ENCODE measurements at regions of chr12 and their contacts with region 1.

Region 1: GRCh38 chr12:71999795-72000194 is 61.1 kb downstream of the TPH2 start:
- DNase-seq: no peak
- H3K4me3 Mint-ChIP-seq: no peak overlapping the region
- H3K27ac Mint-ChIP-seq: no peak overlapping the region
- H3K4me1 Mint-ChIP-seq: peaks cover 13% of the 10 kb centered on the region
- H3K27me3 Mint-ChIP-seq: peaks cover 27% of the 10 kb centered on the region

Region 2: DNA sequence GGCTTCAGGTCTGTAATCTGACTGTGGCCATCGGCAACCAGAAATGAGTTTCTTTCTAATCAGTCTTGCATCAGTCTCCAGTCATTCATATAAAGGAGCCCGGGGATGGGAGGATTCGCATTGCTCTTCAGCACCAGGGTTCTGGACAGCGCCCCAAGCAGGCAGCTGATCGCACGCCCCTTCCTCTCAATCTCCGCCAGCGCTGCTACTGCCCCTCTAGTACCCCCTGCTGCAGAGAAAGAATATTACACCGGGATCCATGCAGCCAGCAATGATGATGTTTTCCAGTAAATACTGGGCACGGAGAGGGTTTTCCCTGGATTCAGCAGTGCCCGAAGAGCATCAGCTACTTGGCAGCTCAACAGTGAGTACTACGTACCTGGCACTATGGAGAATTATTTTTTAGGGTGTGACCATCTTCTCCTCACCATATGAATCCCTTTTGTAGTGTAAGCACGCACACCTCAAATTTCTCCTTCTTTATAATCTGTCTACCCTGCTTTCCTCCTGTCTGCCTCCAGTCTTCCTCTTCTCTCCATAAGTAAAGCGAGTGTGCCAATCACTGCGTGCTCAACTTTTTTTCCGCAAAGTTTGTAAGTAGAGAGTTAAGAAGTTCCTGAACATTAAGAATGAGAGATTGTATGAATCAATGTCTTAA is 60.9 kb before region 1 on chr12 and contains the start of gene TPH2:
- intact Hi-C with region 1: loop called (anchors 5 kb)
- DNase-seq: peak; percentile 49
- H3K4me3 Mint-ChIP-seq: no peak within 1 kb of the TSS
- H3K27ac Mint-ChIP-seq: no peak within 1 kb of the TSS
- H3K4me1 Mint-ChIP-seq: peaks cover 6% of the 10 kb centered on the region
- H3K27me3 Mint-ChIP-seq: peaks cover 32% of the 10 kb centered on the region
- total RNA-seq, gene TPH2: not detected in 2 replicates

Region 3: GRCh38 chr12:72017054-72017651 is 17.4 kb after region 1 on chr12:
- intact Hi-C with region 1: no loop called
- DNase-seq: peak; percentile 36
- H3K4me3 Mint-ChIP-seq: no peak overlapping the region
- H3K27ac Mint-ChIP-seq: no peak overlapping the region
- H3K4me1 Mint-ChIP-seq: no peaks in the 10 kb centered on the region
- H3K27me3 Mint-ChIP-seq: peaks cover 13% of the 10 kb centered on the region

Region 4: DNA sequence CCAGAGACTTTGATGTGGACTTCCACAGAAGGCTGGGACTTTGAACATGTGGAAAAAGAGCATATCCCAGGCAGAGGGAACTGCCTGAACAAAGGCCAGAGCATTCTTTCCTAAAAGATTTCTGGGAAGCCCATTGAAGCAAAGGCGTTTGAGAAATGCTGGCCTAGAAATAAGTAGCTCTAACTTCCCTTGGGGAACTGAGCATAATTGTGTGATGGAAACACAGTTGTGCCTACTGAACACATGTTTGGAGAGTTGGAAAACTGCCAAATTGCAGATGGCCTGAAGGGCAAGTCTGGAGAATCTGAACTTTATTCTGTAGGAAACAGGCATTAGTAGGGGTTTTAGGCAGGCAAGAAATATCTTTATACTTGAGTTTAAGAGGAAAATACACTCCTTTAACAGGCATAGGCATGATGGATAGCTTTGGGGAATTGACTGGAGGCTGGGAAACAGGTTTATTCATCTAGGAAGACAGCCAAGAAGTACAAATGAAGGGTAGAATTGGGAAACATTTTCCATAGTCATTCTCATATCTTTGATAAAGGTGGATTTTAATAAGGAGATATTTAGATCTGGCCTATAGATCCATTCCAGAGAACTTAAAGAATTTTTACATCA is 72.9 kb after region 1 on chr12:
- intact Hi-C with region 1: no loop called
- DNase-seq: no peak
- H3K4me3 Mint-ChIP-seq: no peak overlapping the region
- H3K27ac Mint-ChIP-seq: no peak overlapping the region
- H3K4me1 Mint-ChIP-seq: no peaks in the 10 kb centered on the region
- H3K27me3 Mint-ChIP-seq: no peaks in the 10 kb centered on the region

Measured in activated T-helper 2 cell treated with anti-CD3 and anti-CD28 coated beads, Interferon-gamma antibody, Interleukin-2, Interleukin-4, amounts not matched to agents 10 μg/mL and 5 μg/mL and 100 μg/mL, durations not matched to agents 14 hours and 24 hours and 36 hours (primary cell).